SK-N-SH (cell line): ENCODE measurements at regions of chr16 and their contacts with region 1.

Region 1: DNA sequence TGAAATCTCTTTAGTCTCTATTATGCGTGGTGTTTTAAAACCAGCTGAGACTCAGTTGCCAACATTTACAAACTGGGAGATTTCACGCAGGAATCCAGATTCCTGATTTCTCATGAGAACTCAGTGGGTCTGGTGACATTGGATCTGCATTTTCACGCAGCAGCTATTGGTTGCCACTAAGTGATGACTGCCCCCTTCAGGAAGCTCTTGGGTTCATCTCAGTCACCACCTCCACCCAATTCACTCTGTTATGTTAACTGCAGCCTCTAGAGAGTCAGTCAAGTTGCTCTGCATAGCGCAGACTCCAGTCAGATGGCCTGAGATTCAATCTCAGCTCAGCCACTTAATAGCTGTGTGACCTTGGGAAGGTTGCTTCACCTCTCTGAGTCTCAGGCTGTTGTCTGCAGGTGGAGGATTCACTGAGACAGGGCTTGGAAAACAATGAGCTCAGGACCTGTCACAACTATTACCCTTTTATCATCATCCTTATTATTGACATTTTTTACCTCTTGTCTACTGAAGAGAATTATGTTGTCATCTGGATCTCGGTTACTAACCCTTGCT is 6.4 kb downstream of the SHISA9 start:
- DNase-seq: peak; percentile 38
- H3K4me3 ChIP-seq: no peak overlapping the region
- H3K27ac ChIP-seq: no peak overlapping the region
- H3K4me1 ChIP-seq: no peaks in the 10 kb centered on the region
- H3K27me3 ChIP-seq: peaks cover 18% of the 10 kb centered on the region
- CTCF ChIP-seq: peak; percentile 53
- EP300 ChIP-seq: no peak
- RAD21 ChIP-seq: peak; percentile 64

Region 2: DNA sequence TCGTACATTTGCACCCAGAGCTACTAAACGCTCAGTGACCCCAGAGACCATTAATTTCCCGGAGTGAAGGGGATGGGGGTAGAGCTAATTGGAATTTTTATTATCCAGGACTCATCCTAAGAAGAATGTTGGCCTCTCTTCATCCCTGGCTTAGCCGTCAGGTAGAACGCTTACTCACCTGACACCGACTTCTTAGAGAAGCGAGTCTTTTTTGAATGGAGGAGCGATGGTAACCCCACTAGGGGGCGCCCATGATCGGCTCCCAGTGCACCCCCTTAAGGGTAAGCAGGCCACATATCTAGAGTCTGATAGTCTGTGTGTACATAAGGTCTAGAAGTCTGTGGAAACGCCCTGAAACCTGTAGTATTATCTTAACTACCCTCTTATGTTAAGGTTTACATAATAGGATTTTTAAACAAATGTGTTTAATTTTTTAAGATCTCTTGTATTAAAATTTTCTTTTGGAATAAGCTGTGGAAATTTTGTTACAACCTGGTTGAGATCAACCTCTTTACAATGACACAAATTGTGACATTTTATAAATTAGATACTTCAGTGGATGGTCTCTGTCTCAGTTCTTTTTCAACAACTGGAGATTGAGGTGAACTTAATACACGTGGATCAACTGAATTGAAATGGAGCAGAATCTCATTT is 333.9 kb before region 1 on chr16:
- CTCF ChIA-PET with region 1: interaction called, 23 read pairs
- POLR2A ChIA-PET with region 1: no interaction called
- DNase-seq: peak; percentile 82
- H3K4me3 ChIP-seq: no peak overlapping the region; a peak in 1 of 4 replicates
- H3K27ac ChIP-seq: no peak overlapping the region
- H3K4me1 ChIP-seq: no peaks in the 10 kb centered on the region; a peak in 1 of 4 replicates
- H3K27me3 ChIP-seq: no peaks in the 10 kb centered on the region
- CTCF ChIP-seq: peak; percentile 77
- EP300 ChIP-seq: no peak
- RAD21 ChIP-seq: peak; percentile 83